Activated naive CD4-positive, alpha-beta T cell treated with anti-CD3 and anti-CD28 coated beads for 36 hours (primary cell): ENCODE measurements at regions of chr5 and their contacts with region 1.

Region 1: DNA sequence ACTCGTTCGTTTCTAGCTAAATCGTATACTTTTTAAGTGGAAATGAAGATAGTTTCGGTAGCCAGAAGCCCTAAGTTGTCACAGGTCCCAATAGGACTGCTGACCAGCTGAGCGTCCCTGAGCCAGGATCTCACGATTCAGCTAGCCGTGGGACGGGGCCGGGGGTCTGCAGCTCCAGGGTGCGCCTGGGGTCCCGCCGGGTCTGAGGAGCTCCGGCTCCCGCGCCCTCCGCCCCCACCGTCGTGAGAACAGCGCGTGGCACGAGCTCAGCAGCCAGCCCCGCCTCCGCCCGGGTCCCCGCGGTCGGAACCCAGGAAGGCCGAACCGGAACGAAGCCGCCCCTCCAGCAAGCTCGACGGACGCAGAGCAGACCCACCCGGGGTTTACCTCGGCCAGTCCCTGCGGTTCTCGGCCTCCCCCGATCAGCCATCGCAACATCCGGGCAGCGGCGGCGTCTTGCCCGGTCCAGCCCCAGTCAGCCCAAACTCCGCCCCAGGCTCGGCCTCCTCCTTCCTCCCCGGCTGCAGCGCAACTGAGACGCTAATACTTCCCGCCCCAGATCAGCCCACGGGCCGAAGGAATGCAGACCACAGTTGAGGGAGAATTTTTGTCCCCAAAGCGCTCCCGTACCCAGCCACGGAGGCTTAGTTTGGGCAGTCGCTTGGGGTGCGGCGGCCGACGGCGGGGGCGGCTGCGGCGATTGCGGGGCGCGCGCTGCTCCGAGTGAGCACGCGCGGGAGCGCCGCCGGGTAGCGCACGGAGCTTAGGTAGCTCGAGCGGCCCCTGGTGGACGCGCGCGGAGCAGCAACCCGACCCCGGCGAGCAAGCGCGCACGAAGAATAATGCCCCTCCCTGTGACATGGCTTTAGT is at the start of gene WDR41:
- DNase-seq: peak; percentile 86
- H3K4me3 Mint-ChIP-seq: peak within 1 kb of the TSS; percentile 89
- H3K27ac Mint-ChIP-seq: peak within 1 kb of the TSS; percentile 82
- H3K4me1 Mint-ChIP-seq: peaks cover 15% of the 10 kb centered on the region
- H3K27me3 Mint-ChIP-seq: peaks cover 6% of the 10 kb centered on the region
- total RNA-seq, gene WDR41: 22.4 to 23.0 TPM

Region 2: DNA sequence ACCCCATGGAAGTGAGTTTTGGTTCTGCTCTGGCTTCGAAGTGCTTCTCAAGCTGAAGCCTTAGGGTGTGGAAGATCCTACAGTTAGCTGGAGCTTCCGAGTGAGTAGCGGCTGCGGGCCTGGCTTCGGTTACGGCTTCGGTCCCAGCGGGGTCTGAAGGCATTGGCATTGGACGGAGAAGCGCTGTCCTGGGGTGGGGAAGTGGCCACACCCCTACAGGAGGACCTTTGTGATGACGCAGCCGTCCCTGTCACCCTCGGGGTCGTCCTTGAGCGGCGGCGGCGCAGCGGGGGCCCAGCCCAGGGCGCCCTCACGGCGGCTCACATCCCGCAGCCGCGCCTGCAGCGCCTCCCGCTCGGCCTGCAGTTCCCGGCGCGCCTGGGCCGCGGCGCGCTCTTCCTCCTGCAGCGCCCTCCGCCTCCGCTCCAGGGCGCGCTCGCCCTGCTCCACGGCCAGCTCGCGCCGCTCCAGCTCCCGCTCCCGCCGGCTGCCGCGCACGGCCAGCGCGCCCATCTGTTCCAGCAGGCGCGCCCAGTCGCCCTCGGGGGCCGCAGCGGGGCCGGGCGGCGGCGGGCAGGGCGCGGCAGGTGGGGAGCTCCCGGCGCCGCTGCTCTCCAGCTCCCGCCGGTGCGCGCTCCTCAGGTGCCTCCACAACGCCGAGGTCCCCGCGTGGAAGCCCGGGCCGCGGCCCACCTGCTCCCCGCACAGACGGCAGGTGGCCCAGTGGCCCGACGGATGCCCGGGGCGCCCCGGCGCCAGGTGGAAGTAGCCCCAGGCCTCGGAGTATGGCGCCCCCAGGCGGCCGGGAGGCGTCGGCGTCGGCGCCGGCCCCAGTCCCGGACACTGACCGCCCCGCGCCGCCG is 414.8 kb before region 1 on chr5:
- CTCF ChIA-PET with region 1: interaction called, 3 read pairs
- intact Hi-C with region 1: loop called (anchors 2 kb)
- DNase-seq: peak; percentile 61
- H3K4me3 Mint-ChIP-seq: peak overlapping the region; percentile 37
- H3K27ac Mint-ChIP-seq: no peak overlapping the region
- H3K4me1 Mint-ChIP-seq: peaks cover 7% of the 10 kb centered on the region
- H3K27me3 Mint-ChIP-seq: no peaks in the 10 kb centered on the region

Region 3: GRCh38 chr5:77143998-77144836 is 347.8 kb before region 1 on chr5:
- CTCF ChIA-PET with region 1: interaction called, 27 read pairs
- intact Hi-C with region 1: loop called (anchors 1 kb)
- DNase-seq: peak; percentile 80
- H3K4me3 Mint-ChIP-seq: no peak overlapping the region
- H3K27ac Mint-ChIP-seq: no peak overlapping the region
- H3K4me1 Mint-ChIP-seq: peaks cover 27% of the 10 kb centered on the region
- H3K27me3 Mint-ChIP-seq: peaks cover 3% of the 10 kb centered on the region

Region 4: GRCh38 chr5:77224712-77225355 is 267.2 kb before region 1 on chr5:
- CTCF ChIA-PET with region 1: interaction called, 3 read pairs
- intact Hi-C with region 1: loop called (anchors 5 kb)
- DNase-seq: no peak
- H3K4me3 Mint-ChIP-seq: no peak overlapping the region
- H3K27ac Mint-ChIP-seq: no peak overlapping the region
- H3K4me1 Mint-ChIP-seq: no peaks in the 10 kb centered on the region
- H3K27me3 Mint-ChIP-seq: peaks cover 15% of the 10 kb centered on the region

Region 5: DNA sequence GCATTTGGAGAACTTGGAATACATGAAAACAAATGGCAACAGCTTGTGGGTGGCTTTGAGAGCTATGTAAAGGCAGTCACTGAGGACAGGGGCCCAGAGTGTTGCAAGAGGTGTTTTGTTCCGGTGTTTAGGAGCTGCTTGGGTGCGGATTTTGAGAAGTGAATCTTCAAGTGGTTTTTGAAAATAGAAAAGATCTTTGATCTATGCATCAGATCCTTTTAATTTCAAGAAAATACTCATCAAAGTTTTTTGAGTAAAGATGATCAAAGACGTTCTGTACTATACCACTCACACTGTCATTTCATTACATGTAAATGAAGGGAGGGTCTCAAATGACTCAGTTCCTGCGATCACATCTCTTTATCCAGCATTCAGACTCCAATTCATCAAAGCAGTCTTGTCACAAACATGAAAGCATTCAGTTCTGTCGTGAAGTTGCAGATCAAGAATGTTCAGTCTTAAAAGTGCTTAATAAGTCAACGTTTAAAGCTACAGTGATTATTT is 112.4 kb before region 1 on chr5:
- CTCF ChIA-PET with region 1: interaction called, 8 read pairs
- intact Hi-C with region 1: loop called (anchors 1 kb)
- DNase-seq: peak; percentile 86
- H3K4me3 Mint-ChIP-seq: no peak overlapping the region
- H3K27ac Mint-ChIP-seq: no peak overlapping the region
- H3K4me1 Mint-ChIP-seq: peaks cover 29% of the 10 kb centered on the region
- H3K27me3 Mint-ChIP-seq: peaks cover 14% of the 10 kb centered on the region

Region 6: DNA sequence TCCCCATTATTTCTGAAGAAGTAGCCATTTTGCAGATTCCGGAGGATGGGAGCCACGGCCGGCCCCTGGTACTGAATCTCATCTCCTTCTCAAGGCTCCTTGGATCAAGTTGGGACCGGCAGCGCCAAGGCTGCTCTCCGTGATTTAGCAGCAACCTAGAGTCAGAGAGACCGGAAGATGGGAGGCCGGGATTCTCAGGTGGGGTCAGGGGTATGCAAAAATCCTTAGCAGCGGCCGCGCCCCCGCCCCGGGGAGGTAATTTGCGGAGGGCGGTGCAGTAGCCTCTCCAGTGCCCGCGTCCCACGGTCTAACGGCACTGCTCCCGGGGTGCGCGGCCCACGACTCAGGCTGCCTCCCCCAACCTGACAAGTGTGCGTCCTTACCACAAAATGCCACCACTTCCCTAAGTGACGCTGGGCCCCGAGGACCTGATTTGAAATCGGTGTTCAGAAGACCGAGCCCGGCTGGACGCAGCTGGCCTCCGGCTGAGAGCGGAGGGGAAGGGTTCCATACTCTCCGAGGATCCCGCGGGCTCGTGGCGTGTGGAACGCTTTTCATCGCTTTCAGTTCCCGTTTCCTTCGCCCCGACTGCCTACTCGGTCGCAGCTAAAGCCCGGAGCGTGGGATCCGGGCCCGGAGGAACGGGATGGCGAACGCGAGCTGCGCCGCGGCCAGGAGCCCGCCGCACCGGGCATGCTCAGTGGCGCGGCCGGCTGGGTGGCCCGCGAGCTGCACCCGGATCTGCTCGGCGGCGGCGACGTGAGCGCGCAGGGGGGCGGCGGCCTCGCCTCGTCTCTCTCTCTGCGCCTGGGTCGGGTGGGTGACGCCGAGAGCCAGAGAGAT is 868.0 kb after region 1 on chr5 and contains the start of gene SCAMP1:
- CTCF ChIA-PET with region 1: no interaction called
- intact Hi-C with region 1: loop called (anchors 1 kb)
- DNase-seq: peak; percentile 92
- H3K4me3 Mint-ChIP-seq: peak within 1 kb of the TSS; percentile 95
- H3K27ac Mint-ChIP-seq: peak within 1 kb of the TSS; percentile 97
- H3K4me1 Mint-ChIP-seq: peaks cover 34% of the 10 kb centered on the region
- H3K27me3 Mint-ChIP-seq: no peaks in the 10 kb centered on the region
- total RNA-seq, gene SCAMP1: 9.7 to 10.3 TPM